ENCODE measurements at regions of chr3 and their contacts with region 1.

Region 1: DNA sequence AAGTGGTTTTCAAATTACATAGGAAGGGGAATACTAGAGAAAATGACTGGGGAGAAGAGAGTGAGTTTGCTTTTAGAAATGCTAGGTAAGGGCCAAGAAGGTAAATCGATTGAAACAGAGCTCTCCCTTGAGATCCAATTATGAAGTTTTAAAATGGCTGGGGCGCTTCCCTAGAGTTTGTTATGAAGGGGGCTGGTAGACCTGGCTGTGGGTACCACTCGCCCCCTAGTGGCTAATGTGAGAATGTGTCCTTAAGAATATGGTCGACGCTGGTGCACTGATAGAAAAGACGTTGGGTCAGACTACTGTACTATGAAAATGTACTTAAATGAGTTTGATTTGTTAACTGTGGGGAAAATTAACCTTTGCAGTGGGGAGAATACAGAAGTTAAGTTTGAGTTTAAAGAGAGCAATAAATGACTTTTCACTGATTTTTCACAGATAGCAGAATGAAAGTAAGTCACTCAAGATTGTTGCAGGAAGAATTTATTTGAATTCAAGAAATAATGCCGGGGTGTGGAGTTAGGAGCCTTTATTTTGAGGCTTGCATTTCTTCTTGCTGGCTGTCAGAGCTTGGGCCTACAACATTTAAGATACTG is 9.2 kb downstream of the TMPRSS7 start:
- DNase-seq: peak; percentile 84
- H3K4me3 ChIP-seq: no peak overlapping the region
- H3K27ac ChIP-seq: no peak overlapping the region
- H3K4me1 ChIP-seq: no peaks in the 10 kb centered on the region
- H3K27me3 ChIP-seq: no peaks in the 10 kb centered on the region
- CTCF ChIP-seq: peak; percentile 95

Region 2: GRCh38 chr3:111989061-111989678 is 54.5 kb before region 1 on chr3:
- CTCF ChIA-PET with region 1: interaction called, 21 read pairs
- POLR2A ChIA-PET with region 1: no interaction called
- intact Hi-C with region 1: loop called (anchors 2 kb)
- DNase-seq: peak; percentile 71
- H3K4me3 ChIP-seq: no peak overlapping the region
- H3K27ac ChIP-seq: no peak overlapping the region
- H3K4me1 ChIP-seq: no peaks in the 10 kb centered on the region
- H3K27me3 ChIP-seq: no peaks in the 10 kb centered on the region
- CTCF ChIP-seq: peak; percentile 83

Measured in A673 (cell line).